Cardiac septum (tissue), 1 donor: ENCODE measurements at regions of chr3 and their contacts with region 1.

Region 1: GRCh38 chr3:30606301-30607031 is at the start of gene TGFBR2:
- DNase-seq: peak; percentile 98
- total RNA-seq, gene TGFBR2: 66.7 TPM

Region 2: GRCh38 chr3:30227571-30228301 is 378.7 kb before region 1 on chr3:
- intact Hi-C with region 1: loop called (anchors 10 kb)
- DNase-seq: no peak

Region 3: GRCh38 chr3:30347679-30348216 is 258.7 kb before region 1 on chr3:
- intact Hi-C with region 1: loop called (anchors 5 kb)
- DNase-seq: no peak

Region 4: DNA sequence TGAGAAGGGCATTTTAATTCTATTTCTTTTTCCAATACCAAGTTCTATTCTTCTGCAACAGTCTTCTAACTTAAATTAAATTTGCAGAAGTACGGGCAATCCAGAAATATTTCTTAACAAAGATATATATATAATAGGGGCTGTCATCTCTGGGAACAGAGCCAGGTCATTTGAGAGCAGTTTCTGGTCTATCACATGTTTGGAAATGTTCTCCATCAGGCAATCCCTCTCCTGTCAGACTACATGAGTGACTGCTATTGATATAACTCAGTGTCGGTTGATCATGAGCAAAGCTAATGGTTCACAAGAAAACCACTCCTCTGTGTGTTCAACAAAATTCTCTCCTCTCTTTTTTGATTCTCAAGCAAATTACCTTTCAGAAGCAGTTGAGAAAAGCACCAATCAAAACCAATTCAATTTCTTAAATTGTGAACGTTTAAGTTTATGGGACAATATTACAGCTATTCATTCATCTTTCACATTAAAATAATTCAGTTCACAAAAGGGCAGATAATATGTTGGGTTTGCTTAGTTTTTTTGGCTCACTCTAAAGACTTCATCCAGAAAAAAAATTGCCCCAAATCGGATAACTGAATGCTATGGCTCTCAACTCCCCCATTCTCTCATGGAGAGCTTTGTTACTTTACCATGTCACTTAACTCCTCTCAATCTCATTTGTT is 153.0 kb before region 1 on chr3:
- intact Hi-C with region 1: no loop called
- DNase-seq: no peak

Region 5: GRCh38 chr3:30518181-30518864 is 88.1 kb before region 1 on chr3:
- intact Hi-C with region 1: loop called (anchors 2 kb)
- DNase-seq: no peak

Region 6: GRCh38 chr3:30658328-30659052 is 52.0 kb after region 1 on chr3:
- intact Hi-C with region 1: loop called (anchors 10 kb)
- DNase-seq: no peak